K562 (cell line): ENCODE measurements at regions of chr6 and their contacts with region 1.

Region 1: GRCh38 chr6:68634726-68635411 is at the start of gene ADGRB3:
- DNase-seq: peak; percentile 88 to 93 (median 90)
- ATAC-seq: peak; percentile 83
- H3K4me3 ChIP-seq: peak within 1 kb of the TSS; percentile 81
- H3K27ac ChIP-seq: peak within 1 kb of the TSS; percentile 72
- H3K4me1 ChIP-seq: peaks cover 6 to 27% of the 10 kb centered on the region in 2 experiments; a peak in 4 of 5 replicates
- H3K27me3 ChIP-seq: no peaks in the 10 kb centered on the region; a peak in 1 of 5 replicates
- CTCF ChIP-seq: peak in 2 of 3 experiments; percentile 17 to 65; a peak in 2 of 6 replicates
- EP300 ChIP-seq: no peak
- POLR2A ChIP-seq: no peak
- RAD21 ChIP-seq: peak in 1 of 2 experiments; percentile 18; a peak in 1 of 4 replicates
- polyA plus RNA-seq, gene ADGRB3: 0.90 to 1.5 TPM

Region 2: DNA sequence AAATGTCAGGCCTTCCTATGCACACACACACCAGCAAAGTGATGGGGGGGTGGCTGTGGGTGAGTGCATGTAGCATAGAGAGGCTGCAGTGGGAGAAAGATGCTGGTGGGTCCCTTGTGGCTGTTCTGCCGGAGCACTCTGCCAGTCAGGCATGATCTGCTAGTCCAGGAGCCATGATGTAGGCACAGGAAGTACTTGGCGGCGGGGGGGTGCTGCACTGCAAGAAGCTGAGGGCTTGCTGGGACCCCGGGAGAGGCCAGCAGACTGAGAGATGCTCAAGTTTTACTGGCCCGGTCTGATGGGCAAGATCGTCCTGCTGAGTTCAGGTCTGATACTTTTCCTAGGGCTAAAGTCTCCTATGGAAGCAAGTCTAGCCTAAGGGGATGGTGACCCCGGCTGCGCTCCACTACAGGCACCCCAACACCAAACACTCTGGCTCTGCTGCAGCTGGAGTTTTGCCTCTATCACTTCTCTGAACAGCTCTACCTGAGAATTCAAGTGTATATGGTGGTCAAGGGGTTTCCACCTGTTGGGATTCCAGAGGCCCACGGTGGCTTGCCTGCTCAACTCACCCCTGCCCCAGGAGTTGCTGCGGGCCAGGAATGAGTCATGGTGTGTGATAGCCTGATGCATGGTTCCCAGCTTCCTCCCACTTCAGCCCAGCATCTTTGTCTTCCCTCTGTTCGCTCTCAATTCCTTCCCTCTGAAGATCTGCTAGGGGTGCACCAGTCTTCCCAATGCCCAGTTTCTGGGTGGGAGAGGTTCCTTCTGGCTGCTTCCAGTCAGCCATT is 971.6 kb before region 1 on chr6:
- CTCF ChIA-PET with region 1: no interaction called
- POLR2A ChIA-PET with region 1: no interaction called
- in situ Hi-C with region 1: no loop called
- intact Hi-C with region 1: no loop called
- DNase-seq: no peak
- ATAC-seq: no peak
- H3K4me3 ChIP-seq: no peak overlapping the region
- H3K27ac ChIP-seq: no peak overlapping the region
- H3K4me1 ChIP-seq: peaks cover 4 to 5% of the 10 kb centered on the region in 2 experiments; a peak in 1 of 5 replicates
- H3K27me3 ChIP-seq: no peaks in the 10 kb centered on the region
- CTCF ChIP-seq: no peak
- EP300 ChIP-seq: no peak
- POLR2A ChIP-seq: no peak
- RAD21 ChIP-seq: no peak

Region 3: DNA sequence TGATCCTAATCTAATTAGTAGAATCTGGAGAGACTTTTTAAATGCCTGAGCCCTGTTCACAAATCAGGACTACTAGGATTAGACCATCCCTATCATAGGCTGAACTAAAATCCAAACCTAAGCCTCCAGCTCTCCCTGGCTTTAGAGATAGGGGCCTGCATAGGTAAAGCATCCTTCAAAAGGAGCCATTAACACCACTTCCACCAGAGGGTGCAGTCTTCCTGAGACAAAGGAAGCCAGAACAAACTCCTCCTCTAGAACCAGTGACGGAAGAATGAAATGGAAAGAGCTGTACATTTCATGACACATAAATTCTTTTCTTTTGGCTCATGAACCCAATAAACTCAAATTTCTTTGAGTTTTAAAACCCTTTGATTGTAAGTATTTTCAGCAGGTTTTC is 291.0 kb before region 1 on chr6:
- CTCF ChIA-PET with region 1: interaction called, 5 read pairs
- POLR2A ChIA-PET with region 1: no interaction called
- in situ Hi-C with region 1: loop called (anchors 10 kb)
- intact Hi-C with region 1: loop called (anchors 1 kb)
- DNase-seq: peak; percentile 53 to 82 (median 62)
- ATAC-seq: peak; percentile 99
- H3K4me3 ChIP-seq: no peak overlapping the region
- H3K27ac ChIP-seq: no peak overlapping the region
- H3K4me1 ChIP-seq: no peaks in the 10 kb centered on the region
- H3K27me3 ChIP-seq: no peaks in the 10 kb centered on the region
- CTCF ChIP-seq: peak; percentile 84 to 97 (median 97)
- EP300 ChIP-seq: no peak
- POLR2A ChIP-seq: no peak
- RAD21 ChIP-seq: peak; percentile 85 to 88

Region 4: GRCh38 chr6:68651011-68651985 is 16.4 kb after region 1 on chr6:
- CTCF ChIA-PET with region 1: no interaction called
- POLR2A ChIA-PET with region 1: interaction called, 13 read pairs
- in situ Hi-C with region 1: no loop called
- intact Hi-C with region 1: loop called (anchors 1 kb)
- DNase-seq: no peak
- ATAC-seq: no peak
- H3K4me3 ChIP-seq: no peak overlapping the region
- H3K27ac ChIP-seq: peak overlapping the region; percentile 88
- H3K4me1 ChIP-seq: peaks cover 5 to 22% of the 10 kb centered on the region in 2 experiments; a peak in 4 of 5 replicates
- H3K27me3 ChIP-seq: no peaks in the 10 kb centered on the region
- CTCF ChIP-seq: no peak
- EP300 ChIP-seq: no peak; the same call in 1 of the 2 replicates
- POLR2A ChIP-seq: no peak
- RAD21 ChIP-seq: no peak

Region 5: DNA sequence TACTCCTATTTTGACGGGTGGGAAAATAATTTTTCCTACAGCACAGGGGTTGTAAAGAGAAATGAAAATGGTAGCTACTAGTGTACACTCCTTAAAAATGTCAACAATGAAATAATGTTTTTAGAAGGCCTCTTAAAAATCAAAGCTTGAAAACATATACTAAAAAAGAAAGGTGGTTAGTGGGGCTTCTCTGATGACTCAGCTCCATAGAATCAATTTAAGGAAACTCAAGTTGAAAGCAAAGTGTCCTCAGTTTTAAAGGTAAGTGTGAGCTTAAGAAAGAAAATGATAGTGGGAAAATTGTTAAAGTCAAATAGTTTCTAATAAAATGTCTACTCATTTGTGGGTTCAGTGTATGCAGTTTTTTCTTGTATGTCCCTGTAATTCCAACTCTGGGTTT is 58.4 kb after region 1 on chr6:
- CTCF ChIA-PET with region 1: no interaction called
- POLR2A ChIA-PET with region 1: no interaction called
- in situ Hi-C with region 1: no loop called
- intact Hi-C with region 1: no loop called
- DNase-seq: no peak
- ATAC-seq: no peak
- H3K4me3 ChIP-seq: no peak overlapping the region
- H3K27ac ChIP-seq: peak overlapping the region; percentile 57; the same call in 2 of the 3 replicates
- H3K4me1 ChIP-seq: peaks cover 0 to 45% of the 10 kb centered on the region in 2 experiments; a peak in 3 of 5 replicates
- H3K27me3 ChIP-seq: no peaks in the 10 kb centered on the region
- CTCF ChIP-seq: no peak
- EP300 ChIP-seq: no peak
- POLR2A ChIP-seq: no peak
- RAD21 ChIP-seq: no peak

Region 6: GRCh38 chr6:68778356-68779020 is 143.6 kb after region 1 on chr6:
- CTCF ChIA-PET with region 1: interaction called, 47 read pairs
- POLR2A ChIA-PET with region 1: interaction called, 9 read pairs
- in situ Hi-C with region 1: loop called (anchors 5 kb)
- intact Hi-C with region 1: loop called (anchors 1 kb)
- DNase-seq: peak; percentile 36 to 76 (median 47)
- ATAC-seq: peak; percentile 87
- H3K4me3 ChIP-seq: no peak overlapping the region
- H3K27ac ChIP-seq: no peak overlapping the region
- H3K4me1 ChIP-seq: 0 out of 5 replicates have a peak, but pooled peaks cover 0 to 3% of the 10 kb centered on the region in 2 experiments
- H3K27me3 ChIP-seq: no peaks in the 10 kb centered on the region
- CTCF ChIP-seq: peak; percentile 78 to 93 (median 86)
- EP300 ChIP-seq: no peak
- POLR2A ChIP-seq: no peak
- RAD21 ChIP-seq: peak; percentile 97

Region 7: GRCh38 chr6:70107852-70108629 is 1473.2 kb after region 1 on chr6:
- CTCF ChIA-PET with region 1: no interaction called
- POLR2A ChIA-PET with region 1: no interaction called
- in situ Hi-C with region 1: no loop called
- intact Hi-C with region 1: loop called (anchors 5 kb)
- DNase-seq: peak; percentile 34 to 55 (median 36)
- ATAC-seq: peak; percentile 61; the same call in 2 of the 3 replicates
- H3K4me3 ChIP-seq: no peak overlapping the region
- H3K27ac ChIP-seq: no peak overlapping the region
- H3K4me1 ChIP-seq: no peaks in the 10 kb centered on the region
- H3K27me3 ChIP-seq: no peaks in the 10 kb centered on the region; a peak in 1 of 5 replicates
- CTCF ChIP-seq: peak; percentile 30 to 75 (median 53); a peak in 4 of 6 replicates
- EP300 ChIP-seq: no peak
- POLR2A ChIP-seq: no peak
- RAD21 ChIP-seq: peak; percentile 83 to 84